BJ (cell line): ENCODE measurements at regions of chr2 and their contacts with region 1.

Region 1: DNA sequence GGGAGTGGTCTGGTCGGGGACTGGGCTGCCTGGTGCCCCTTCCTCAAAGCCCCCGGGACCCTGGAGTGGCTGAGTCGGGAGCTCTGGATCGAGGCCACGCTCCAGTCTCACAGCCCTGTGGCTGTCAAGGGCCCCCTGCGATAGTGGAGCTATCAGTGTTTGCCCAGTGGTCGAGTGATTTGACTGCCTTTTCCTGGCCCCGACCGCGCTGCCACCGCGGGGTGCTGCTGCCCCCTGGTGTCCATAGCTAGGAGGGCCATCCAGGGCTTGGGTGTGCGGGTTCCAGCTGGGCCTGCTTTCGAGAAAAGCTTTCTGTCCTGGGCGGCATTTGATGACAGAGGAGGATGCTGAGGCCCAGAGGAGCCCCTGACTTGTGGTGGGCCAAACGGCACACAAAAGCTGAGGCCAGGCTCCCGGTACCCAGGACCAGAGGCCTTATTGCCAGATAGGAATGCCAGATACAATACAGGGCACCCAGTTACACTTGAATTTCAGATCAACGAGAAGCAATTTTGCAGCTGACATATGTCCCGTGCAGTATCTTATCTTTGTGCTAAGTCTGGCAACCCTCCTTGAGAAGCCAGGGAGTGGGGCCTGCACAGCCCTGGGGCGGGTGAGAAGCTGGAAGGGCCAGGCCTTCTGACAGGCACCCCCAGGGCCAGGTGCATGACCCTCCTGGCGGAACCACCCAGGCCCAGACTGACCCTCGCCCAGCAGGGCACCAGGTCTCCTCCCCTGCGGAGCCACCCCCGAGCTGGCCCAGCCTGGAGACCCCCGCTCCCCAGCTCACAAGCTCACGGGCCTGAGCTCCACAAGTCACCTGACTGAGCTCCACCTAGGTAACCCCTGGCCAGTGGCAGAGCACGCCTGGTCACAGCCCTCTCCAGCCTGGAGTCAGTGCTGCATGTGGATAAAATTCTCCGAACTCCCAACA is 13.0 kb downstream of the ODC1 start:
- DNase-seq: no peak
- H3K4me3 ChIP-seq: no peak overlapping the region
- H3K27me3 ChIP-seq: no peaks in the 10 kb centered on the region
- CTCF ChIP-seq: peak; percentile 97

Region 2: DNA sequence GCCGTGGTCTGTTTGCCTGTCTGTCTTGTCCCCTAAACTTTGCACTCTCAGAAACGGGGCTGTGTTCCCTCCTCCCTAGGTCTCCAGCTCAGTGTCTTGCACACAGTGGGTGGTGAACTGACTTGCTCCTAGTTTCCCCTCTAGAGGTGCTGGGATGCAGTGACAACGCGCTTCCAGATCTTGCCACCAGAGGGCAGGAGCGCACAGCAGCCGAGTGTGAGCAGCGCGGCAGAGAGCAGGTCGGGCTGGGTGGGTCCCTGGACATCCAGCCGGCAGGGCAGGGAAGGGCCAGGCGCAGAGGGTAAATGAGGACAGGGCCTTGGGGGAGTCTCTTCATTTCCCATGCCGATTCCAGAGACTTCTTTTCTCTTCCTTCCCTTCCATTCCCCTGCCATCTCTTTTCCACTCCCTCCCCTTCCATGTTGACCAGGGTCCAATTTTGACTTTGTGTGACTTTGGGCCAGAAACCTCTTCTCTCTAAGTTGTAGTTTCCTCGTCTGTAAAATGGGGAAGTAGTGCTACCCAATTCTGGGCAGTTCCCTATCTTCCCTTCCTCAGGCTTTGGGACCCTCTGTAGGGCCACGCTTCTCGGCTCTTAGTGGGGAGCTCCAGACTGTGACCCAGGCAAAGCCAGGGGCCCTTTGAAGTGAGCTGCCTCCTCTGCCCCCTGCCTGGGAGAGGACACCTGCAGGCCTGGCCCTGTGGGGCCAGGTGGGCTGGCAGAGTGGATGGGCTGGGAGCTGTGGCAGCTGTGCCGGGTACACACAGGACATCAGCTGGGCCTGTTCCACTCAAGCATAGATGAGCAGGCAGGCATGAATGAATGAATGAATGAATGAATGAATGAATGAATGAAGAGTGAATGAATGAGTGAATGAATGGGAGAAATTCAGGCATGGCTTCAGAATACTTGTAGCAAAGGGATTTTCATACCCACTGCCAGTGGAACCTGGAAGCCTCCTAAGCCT is 635.2 kb before region 1 on chr2:
- CTCF ChIA-PET with region 1: interaction called, 11 read pairs
- POLR2A ChIA-PET with region 1: no interaction called
- DNase-seq: no peak
- H3K4me3 ChIP-seq: no peak overlapping the region
- H3K27me3 ChIP-seq: peaks cover 1% of the 10 kb centered on the region; the same call in 1 of the 2 replicates
- CTCF ChIP-seq: peak; percentile 99

Region 3: GRCh38 chr2:10079234-10079869 is 355.8 kb before region 1 on chr2:
- CTCF ChIA-PET with region 1: interaction called, 192 read pairs
- POLR2A ChIA-PET with region 1: interaction called, 12 read pairs
- DNase-seq: peak; percentile 27
- H3K4me3 ChIP-seq: peak overlapping the region; percentile 44
- H3K27me3 ChIP-seq: peaks cover 14% of the 10 kb centered on the region
- CTCF ChIP-seq: no peak

Region 4: DNA sequence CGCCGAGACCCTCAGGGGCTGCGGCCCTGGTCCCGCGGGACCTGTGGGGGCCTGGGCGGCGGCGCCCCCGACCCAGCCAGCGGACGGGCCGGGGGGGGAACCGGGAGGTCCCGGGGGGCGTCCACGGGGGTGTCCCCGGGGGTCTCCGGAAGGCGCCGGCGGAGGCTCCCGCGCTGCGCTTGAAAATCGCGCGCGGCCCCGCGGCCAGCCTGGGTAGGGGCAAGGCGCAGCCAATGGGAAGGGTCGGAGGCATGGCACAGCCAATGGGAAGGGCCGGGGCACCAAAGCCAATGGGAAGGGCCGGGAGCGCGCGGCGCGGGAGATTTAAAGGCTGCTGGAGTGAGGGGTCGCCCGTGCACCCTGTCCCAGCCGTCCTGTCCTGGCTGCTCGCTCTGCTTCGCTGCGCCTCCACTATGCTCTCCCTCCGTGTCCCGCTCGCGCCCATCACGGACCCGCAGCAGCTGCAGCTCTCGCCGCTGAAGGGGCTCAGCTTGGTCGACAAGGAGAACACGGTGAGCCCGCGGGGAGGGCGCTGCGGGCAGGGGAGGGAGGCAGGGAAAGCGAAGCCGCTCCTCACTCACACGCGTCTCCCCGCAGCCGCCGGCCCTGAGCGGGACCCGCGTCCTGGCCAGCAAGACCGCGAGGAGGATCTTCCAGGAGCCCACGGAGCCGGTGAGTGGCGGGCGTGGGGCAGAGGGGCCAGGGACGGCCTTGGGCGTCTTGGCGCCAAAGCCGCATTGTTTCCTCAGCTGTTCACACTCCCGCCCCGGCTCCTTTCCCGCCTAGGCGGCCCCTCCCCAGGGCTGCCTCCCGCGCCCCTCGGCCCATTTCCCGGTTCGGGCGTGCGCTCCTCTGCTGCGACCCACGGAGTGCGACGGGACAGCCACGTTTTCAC is 312.5 kb before region 1 on chr2 and contains the start of gene RRM2:
- CTCF ChIA-PET with region 1: interaction called, 93 read pairs
- POLR2A ChIA-PET with region 1: no interaction called
- DNase-seq: no peak
- H3K4me3 ChIP-seq: peak within 1 kb of the TSS; percentile 80
- H3K27me3 ChIP-seq: no peaks in the 10 kb centered on the region
- CTCF ChIP-seq: no peak
- polyA plus RNA-seq, gene RRM2: 23.5 and 31.8 TPM in 2 replicates

Region 5: GRCh38 chr2:10141736-10142642 is 293.2 kb before region 1 on chr2:
- CTCF ChIA-PET with region 1: interaction called, 21 read pairs
- POLR2A ChIA-PET with region 1: no interaction called
- DNase-seq: no peak
- H3K4me3 ChIP-seq: no peak overlapping the region
- H3K27me3 ChIP-seq: no peaks in the 10 kb centered on the region
- CTCF ChIP-seq: peak; percentile 56

Region 6: GRCh38 chr2:10408649-10409579 is 26.2 kb before region 1 on chr2:
- CTCF ChIA-PET with region 1: interaction called, 18 read pairs
- POLR2A ChIA-PET with region 1: no interaction called
- DNase-seq: no peak
- H3K4me3 ChIP-seq: no peak overlapping the region
- H3K27me3 ChIP-seq: no peaks in the 10 kb centered on the region
- CTCF ChIP-seq: peak; percentile 98

Region 7: GRCh38 chr2:10447300-10448207 is 12.4 kb after region 1 on chr2:
- CTCF ChIA-PET with region 1: interaction called, 36 read pairs
- POLR2A ChIA-PET with region 1: no interaction called
- DNase-seq: no peak
- H3K4me3 ChIP-seq: peak overlapping the region; percentile 63
- H3K27me3 ChIP-seq: no peaks in the 10 kb centered on the region
- CTCF ChIP-seq: peak; percentile 12; the same call in 1 of the 2 replicates